A673 (cell line): ENCODE measurements at regions of chr3 and their contacts with region 1.

Region 1: DNA sequence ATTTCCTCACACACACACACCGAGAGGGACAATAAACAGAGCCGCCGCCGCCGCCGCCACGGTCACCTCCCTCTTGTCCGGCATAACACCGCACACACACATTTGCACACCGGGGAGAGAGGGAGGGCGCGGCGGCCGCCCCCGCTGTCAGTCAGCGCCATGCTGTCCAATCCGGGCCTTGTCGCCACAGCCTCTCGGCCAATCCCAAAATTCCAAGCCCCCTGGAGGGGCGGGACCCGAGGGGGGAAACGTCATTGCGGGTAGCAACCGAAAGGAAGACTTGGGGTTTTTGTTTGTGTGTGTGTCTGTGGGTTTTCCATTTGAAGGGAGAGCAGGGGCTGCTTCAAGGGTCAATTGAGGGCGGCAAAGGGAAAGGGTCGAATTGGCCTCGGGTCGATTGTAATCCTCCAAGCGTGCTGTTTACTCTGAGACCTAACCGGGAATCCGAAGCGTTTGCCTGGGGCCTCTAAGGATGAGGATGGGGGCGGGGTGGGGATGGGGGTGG is at the start of gene TOP2B:
- DNase-seq: peak; percentile 98
- H3K4me3 ChIP-seq: peak within 1 kb of the TSS; percentile 72
- H3K27ac ChIP-seq: peak within 1 kb of the TSS; percentile 94
- H3K4me1 ChIP-seq: peaks cover 24% of the 10 kb centered on the region
- H3K27me3 ChIP-seq: no peaks in the 10 kb centered on the region
- CTCF ChIP-seq: no peak
- total RNA-seq, gene TOP2B: 154 and 177 TPM in 2 replicates

Region 2: DNA sequence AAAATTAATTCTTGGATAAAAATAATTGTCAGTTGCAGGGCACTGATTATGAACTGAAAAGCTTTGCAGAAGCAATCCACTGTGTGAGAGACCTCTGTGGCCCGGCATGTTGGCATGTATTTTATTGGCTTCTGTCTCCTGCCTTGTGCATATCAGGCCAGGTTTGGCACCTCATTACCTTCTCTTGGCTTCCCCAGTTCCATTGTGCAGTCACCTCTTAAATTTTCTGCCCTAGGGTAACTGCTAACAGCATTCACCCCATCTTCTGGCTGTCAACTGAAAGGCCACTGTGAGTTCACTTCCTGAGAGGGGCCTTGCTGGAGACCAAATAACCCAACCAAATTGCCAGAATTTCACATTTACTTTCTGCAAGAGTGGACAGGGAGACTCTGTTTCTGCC is 329.5 kb before region 1 on chr3:
- CTCF ChIA-PET with region 1: no interaction called
- POLR2A ChIA-PET with region 1: no interaction called
- intact Hi-C with region 1: no loop called
- DNase-seq: no peak
- H3K4me3 ChIP-seq: no peak overlapping the region
- H3K27ac ChIP-seq: no peak overlapping the region
- H3K4me1 ChIP-seq: no peaks in the 10 kb centered on the region
- H3K27me3 ChIP-seq: peaks cover 4% of the 10 kb centered on the region
- CTCF ChIP-seq: no peak

Region 3: GRCh38 chr3:25831578-25831977 is 166.7 kb after region 1 on chr3:
- CTCF ChIA-PET with region 1: no interaction called
- POLR2A ChIA-PET with region 1: no interaction called
- intact Hi-C with region 1: loop called (anchors 5 kb)
- DNase-seq: peak; percentile 65
- H3K4me3 ChIP-seq: no peak overlapping the region
- H3K27ac ChIP-seq: no peak overlapping the region
- H3K4me1 ChIP-seq: peaks cover 17% of the 10 kb centered on the region
- H3K27me3 ChIP-seq: peaks cover 29% of the 10 kb centered on the region
- CTCF ChIP-seq: peak; percentile 51; the same call in 1 of the 2 replicates